Ovary (tissue), 10 donors: ENCODE measurements at regions of chr16 and their contacts with region 1.

Region 1: DNA sequence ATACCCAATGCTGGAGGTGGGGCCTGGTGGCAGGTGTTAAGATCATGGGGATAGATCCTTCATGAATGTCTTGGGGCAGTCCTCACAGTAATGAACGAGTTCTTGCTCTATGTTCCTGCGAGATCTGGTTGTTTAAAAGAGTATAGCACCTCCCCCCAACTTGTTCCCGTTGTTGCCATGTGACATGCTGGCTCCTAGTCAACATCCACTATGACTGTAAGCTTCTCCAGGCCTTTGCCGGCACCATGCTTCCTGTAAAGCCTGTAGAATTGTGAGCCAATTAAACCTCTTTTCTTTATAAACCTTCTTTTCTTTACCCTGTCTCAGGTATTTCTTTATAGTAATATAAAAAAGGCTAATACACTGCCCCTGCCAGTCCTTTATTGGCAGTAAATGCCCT is 33.3 kb downstream of the RANBP10 start:
- DNase-seq: peak; percentile 38 to 63 (median 43)
- H3K4me3 ChIP-seq: no peak overlapping the region
- H3K27ac ChIP-seq: peak overlapping the region in 1 of 2 donors; percentile 48
- H3K4me1 ChIP-seq: peaks cover 13% of the 10 kb centered on the region
- H3K27me3 ChIP-seq: no peaks in the 10 kb centered on the region
- CTCF ChIP-seq: no peak
- EP300 ChIP-seq: no peak
- POLR2A ChIP-seq: no peak

Region 2: GRCh38 chr16:66619534-66620458 is 1153.3 kb before region 1 on chr16:
- intact Hi-C with region 1: loop called in 1 of 4 experiments (anchors 10 kb)
- DNase-seq: no peak
- H3K4me3 ChIP-seq: no peak overlapping the region
- H3K27ac ChIP-seq: no peak overlapping the region
- H3K4me1 ChIP-seq: peaks cover 3% of the 10 kb centered on the region
- H3K27me3 ChIP-seq: no peaks in the 10 kb centered on the region
- CTCF ChIP-seq: no peak
- EP300 ChIP-seq: no peak
- POLR2A ChIP-seq: no peak

Region 3: GRCh38 chr16:68506331-68507053 is 733.4 kb after region 1 on chr16:
- intact Hi-C with region 1: no loop called
- DNase-seq: no peak
- H3K4me3 ChIP-seq: no peak overlapping the region
- H3K27ac ChIP-seq: no peak overlapping the region
- H3K4me1 ChIP-seq: peaks cover 3% of the 10 kb centered on the region
- H3K27me3 ChIP-seq: no peaks in the 10 kb centered on the region
- CTCF ChIP-seq: no peak
- EP300 ChIP-seq: no peak
- POLR2A ChIP-seq: no peak

Region 4: DNA sequence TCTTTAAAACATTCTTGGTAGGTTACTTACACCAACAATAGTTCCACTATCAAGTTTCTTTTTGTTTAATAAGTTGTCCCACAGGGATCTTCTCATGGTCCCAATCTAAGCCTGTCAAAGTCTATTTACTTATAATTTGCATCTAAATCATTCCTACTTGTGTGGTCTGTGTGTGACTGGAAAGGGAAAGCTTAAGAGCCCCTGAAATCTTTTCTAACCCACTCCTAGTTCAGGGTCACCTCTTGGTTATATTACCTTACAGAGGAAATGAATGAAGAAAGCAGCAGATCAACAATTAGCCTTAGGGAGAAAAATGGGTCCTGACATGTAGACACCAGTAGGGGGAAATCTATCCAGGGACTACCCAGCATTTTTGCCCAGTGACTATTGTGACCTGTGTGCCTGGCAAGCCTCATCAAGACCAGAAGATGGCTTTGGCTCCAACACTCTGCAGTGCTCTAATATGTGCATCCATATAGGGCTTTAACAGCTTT is 1222.0 kb after region 1 on chr16:
- intact Hi-C with region 1: no loop called
- DNase-seq: no peak
- H3K4me3 ChIP-seq: no peak overlapping the region
- H3K27ac ChIP-seq: no peak overlapping the region
- H3K4me1 ChIP-seq: no peaks in the 10 kb centered on the region
- H3K27me3 ChIP-seq: no peaks in the 10 kb centered on the region
- CTCF ChIP-seq: no peak
- EP300 ChIP-seq: no peak
- POLR2A ChIP-seq: no peak